HepG2 (cell line): ENCODE measurements at regions of chr11 and their contacts with region 1.

Region 1: DNA sequence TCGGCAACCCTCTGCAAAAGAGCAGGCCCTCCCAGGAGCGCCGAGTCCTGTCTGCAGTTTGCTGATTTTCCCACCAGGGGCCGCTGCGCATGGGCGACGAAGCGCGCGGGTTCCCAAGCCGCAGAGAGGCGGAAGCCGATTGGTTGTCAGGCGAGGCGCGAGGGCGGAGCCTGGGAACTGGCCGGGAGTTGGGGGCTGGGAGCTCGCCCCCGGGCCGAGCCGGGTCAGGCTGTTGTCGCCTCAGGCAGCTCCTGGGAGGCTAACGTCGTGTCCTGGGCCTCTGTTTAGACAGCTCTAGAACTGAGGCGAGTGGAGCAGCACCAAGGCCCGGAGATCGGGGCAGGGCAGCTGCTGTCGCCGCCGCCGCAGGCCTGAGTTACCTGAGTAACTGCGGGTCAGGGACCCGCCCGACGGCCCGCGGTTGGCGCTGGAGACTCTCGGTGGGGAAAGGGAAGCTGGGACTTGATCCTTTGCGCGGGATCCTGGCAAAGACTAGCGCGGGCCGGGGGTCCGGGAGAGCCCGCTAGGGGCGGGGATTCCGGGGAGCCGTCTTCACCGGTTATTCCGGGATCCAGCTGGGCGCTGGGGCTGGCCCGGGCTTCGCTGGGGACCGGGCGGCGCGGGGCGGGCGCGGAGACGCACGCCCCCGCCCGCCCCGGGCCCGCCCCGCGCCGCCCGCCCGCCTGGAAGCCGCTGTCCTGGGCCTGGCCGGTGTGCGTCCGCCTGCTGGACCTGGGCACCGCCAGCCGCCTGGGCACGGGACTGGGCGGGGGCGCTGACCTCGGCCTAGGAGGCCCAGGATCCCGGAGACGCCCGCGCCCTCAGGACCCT is at the start of gene STIM1:
- DNase-seq: peak; percentile 84
- ATAC-seq: peak; percentile 88
- H3K4me3 ChIP-seq: peak within 1 kb of the TSS; percentile 83 to 96 (median 87)
- H3K27ac ChIP-seq: peak within 1 kb of the TSS; percentile 86
- H3K4me1 ChIP-seq: peaks cover 49% of the 10 kb centered on the region
- H3K27me3 ChIP-seq: no peaks in the 10 kb centered on the region; a peak in 1 of 5 replicates
- CTCF ChIP-seq: peak; percentile 98
- EP300 ChIP-seq: no peak
- POLR2A ChIP-seq: peak in 1 of 2 experiments; percentile 65; a peak in 3 of 4 replicates
- RAD21 ChIP-seq: peak; percentile 95
- total RNA-seq, gene STIM1: 16.3 and 19.2 TPM in 2 replicates

Region 2: DNA sequence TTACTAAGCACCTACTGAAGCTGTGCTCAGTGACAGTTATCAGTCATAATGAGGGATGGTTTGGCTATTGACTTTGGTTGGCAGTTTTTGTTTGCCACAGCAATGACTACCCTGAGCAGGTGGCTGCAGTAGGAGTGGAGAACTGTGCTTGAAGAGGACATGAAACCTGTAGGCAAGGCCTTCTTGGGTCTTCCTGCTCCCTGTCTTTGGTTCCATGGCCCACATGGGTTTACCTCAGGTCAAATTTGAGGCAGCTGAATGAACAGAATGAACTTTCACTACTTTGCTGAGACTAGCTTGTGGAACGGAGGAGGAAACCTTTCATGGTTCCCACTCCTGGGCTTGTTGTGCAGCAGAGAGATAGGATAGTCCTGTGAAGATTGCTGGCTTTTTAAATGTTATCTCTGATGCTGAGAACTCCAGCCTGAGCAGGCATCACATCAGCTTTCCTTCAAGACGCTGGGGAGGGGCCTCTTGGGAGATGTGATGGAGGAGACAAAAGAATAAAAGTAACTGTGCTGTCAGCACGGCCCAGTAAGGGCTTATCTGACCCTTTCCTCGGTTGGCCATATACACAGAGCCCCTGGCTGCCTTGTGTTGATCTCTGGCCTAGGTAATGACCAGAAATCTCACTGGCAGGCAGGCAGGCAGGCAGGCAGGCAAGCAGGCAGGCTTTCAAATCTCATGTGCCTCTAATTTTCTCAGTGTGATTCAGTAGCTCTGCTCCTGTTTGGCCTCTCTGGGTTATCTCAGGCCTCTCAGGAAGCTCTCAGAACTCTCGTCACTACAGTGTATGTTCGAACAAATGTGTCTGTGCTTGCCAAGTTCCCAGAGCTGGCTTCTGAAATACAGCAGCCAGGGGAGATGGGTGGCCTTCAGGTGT is 12.3 kb after region 1 on chr11:
- CTCF ChIA-PET with region 1: no interaction called
- POLR2A ChIA-PET with region 1: interaction called, 44 read pairs
- in situ Hi-C with region 1: no loop called
- intact Hi-C with region 1: no loop called
- DNase-seq: peak; percentile 28
- ATAC-seq: peak; percentile 59
- H3K4me3 ChIP-seq: peak overlapping the region; percentile 15 to 33 (median 19)
- H3K27ac ChIP-seq: peak overlapping the region; percentile 84
- H3K4me1 ChIP-seq: peaks cover 67% of the 10 kb centered on the region
- H3K27me3 ChIP-seq: no peaks in the 10 kb centered on the region; a peak in 1 of 5 replicates
- CTCF ChIP-seq: no peak
- EP300 ChIP-seq: no peak
- POLR2A ChIP-seq: no peak
- RAD21 ChIP-seq: no peak

Region 3: GRCh38 chr11:3905080-3905953 is 50.1 kb after region 1 on chr11:
- CTCF ChIA-PET with region 1: no interaction called
- POLR2A ChIA-PET with region 1: interaction called, 33 read pairs
- in situ Hi-C with region 1: no loop called
- intact Hi-C with region 1: loop called (anchors 2 kb)
- DNase-seq: peak; percentile 98
- ATAC-seq: peak; percentile 97
- H3K4me3 ChIP-seq: peak overlapping the region; percentile 4 to 33 (median 28); a peak in 2 of 6 replicates
- H3K27ac ChIP-seq: peak overlapping the region; percentile 94
- H3K4me1 ChIP-seq: peaks cover 80% of the 10 kb centered on the region
- H3K27me3 ChIP-seq: no peaks in the 10 kb centered on the region
- CTCF ChIP-seq: no peak
- EP300 ChIP-seq: peak; percentile 86 to 91
- POLR2A ChIP-seq: peak in 1 of 2 experiments; percentile 38; a peak in 1 of 4 replicates
- RAD21 ChIP-seq: no peak

Region 4: GRCh38 chr11:3942160-3942955 is 87.2 kb after region 1 on chr11:
- CTCF ChIA-PET with region 1: no interaction called
- POLR2A ChIA-PET with region 1: interaction called, 6 read pairs
- in situ Hi-C with region 1: no loop called
- intact Hi-C with region 1: loop called (anchors 5 kb)
- DNase-seq: peak; percentile 84
- ATAC-seq: peak; percentile 99
- H3K4me3 ChIP-seq: peak overlapping the region in 2 of 3 experiments; percentile 2 to 20; a peak in 1 of 6 replicates
- H3K27ac ChIP-seq: peak overlapping the region; percentile 65
- H3K4me1 ChIP-seq: peaks cover 43% of the 10 kb centered on the region
- H3K27me3 ChIP-seq: no peaks in the 10 kb centered on the region
- CTCF ChIP-seq: peak; percentile 83
- EP300 ChIP-seq: peak in 1 of 2 experiments; percentile 73; a peak in 1 of 4 replicates
- POLR2A ChIP-seq: no peak
- RAD21 ChIP-seq: peak; percentile 73

Region 5: GRCh38 chr11:3995949-3996554 is 140.9 kb after region 1 on chr11:
- CTCF ChIA-PET with region 1: no interaction called
- POLR2A ChIA-PET with region 1: no interaction called
- in situ Hi-C with region 1: no loop called
- intact Hi-C with region 1: no loop called
- DNase-seq: no peak
- ATAC-seq: no peak
- H3K4me3 ChIP-seq: no peak overlapping the region
- H3K27ac ChIP-seq: no peak overlapping the region
- H3K4me1 ChIP-seq: no peaks in the 10 kb centered on the region
- H3K27me3 ChIP-seq: no peaks in the 10 kb centered on the region
- CTCF ChIP-seq: no peak
- EP300 ChIP-seq: no peak
- POLR2A ChIP-seq: no peak
- RAD21 ChIP-seq: no peak

Region 6: GRCh38 chr11:4060182-4060923 is 205.2 kb after region 1 on chr11:
- CTCF ChIA-PET with region 1: no interaction called
- POLR2A ChIA-PET with region 1: interaction called, 12 read pairs
- in situ Hi-C with region 1: no loop called
- intact Hi-C with region 1: no loop called
- DNase-seq: peak; percentile 80
- ATAC-seq: peak; percentile 89
- H3K4me3 ChIP-seq: no peak overlapping the region
- H3K27ac ChIP-seq: no peak overlapping the region
- H3K4me1 ChIP-seq: peaks cover 22% of the 10 kb centered on the region
- H3K27me3 ChIP-seq: no peaks in the 10 kb centered on the region; a peak in 1 of 5 replicates
- CTCF ChIP-seq: no peak
- EP300 ChIP-seq: 0 out of 4 replicates have a peak, but pooled peaks of 1 of the 2 experiments have one; percentile 42
- POLR2A ChIP-seq: no peak
- RAD21 ChIP-seq: no peak